ENCODE measurements at regions of chr4 and their contacts with region 1.

Region 1: GRCh38 chr4:2468445-2469192 is at the start of gene RNF4:
- DNase-seq: peak; percentile 96
- H3K4me3 ChIP-seq: peak within 1 kb of the TSS; percentile 91 to 92
- H3K27ac ChIP-seq: peak within 1 kb of the TSS; percentile 87 to 93
- H3K4me1 ChIP-seq: no peaks in the 10 kb centered on the region
- H3K27me3 ChIP-seq: no peaks in the 10 kb centered on the region
- CTCF ChIP-seq: peak in 2 of 4 experiments; percentile 3 to 16
- POLR2A ChIP-seq: peak; percentile 64
- total RNA-seq, gene RNF4: 33.9 to 56.1 TPM

Region 2: GRCh38 chr4:2515830-2516550 is 47.4 kb after region 1 on chr4:
- intact Hi-C with region 1: no loop called
- DNase-seq: no peak
- H3K4me3 ChIP-seq: no peak overlapping the region
- H3K27ac ChIP-seq: no peak overlapping the region
- H3K4me1 ChIP-seq: no peaks in the 10 kb centered on the region
- H3K27me3 ChIP-seq: no peaks in the 10 kb centered on the region
- CTCF ChIP-seq: no peak
- POLR2A ChIP-seq: no peak

Region 3: DNA sequence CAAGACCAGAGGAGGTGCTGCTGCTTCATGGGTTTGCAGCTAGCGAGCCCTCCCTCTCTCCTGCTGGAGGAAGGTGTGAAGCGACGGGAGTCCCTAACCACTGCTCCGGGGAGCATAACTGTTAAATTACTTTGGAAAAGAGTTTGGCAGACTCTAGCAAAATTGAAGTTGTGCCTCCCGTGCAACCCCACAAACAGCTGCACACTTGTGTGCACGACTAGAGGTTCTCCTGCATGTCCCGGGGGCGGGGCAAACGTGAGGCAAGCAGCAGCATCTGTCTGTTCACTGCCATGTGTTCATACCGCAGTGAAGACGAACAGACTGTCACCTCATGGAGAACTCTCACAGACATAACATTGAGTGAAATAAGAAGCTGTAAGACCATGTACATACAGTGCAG is 253.0 kb after region 1 on chr4:
- intact Hi-C with region 1: no loop called
- DNase-seq: no peak
- H3K4me3 ChIP-seq: no peak overlapping the region
- H3K27ac ChIP-seq: no peak overlapping the region
- H3K4me1 ChIP-seq: no peaks in the 10 kb centered on the region
- H3K27me3 ChIP-seq: no peaks in the 10 kb centered on the region
- CTCF ChIP-seq: no peak
- POLR2A ChIP-seq: no peak

Region 4: GRCh38 chr4:2843263-2843940 is 374.8 kb after region 1 on chr4 and contains the start of gene ADD1:
- intact Hi-C with region 1: no loop called
- DNase-seq: peak; percentile 90
- H3K4me3 ChIP-seq: peak within 1 kb of the TSS; percentile 69 to 96
- H3K27ac ChIP-seq: peak within 1 kb of the TSS; percentile 92 to 95
- H3K4me1 ChIP-seq: peaks cover 2% of the 10 kb centered on the region
- H3K27me3 ChIP-seq: no peaks in the 10 kb centered on the region
- CTCF ChIP-seq: no peak
- POLR2A ChIP-seq: peak; percentile 75
- total RNA-seq, gene ADD1: 164 to 321 TPM

Region 5: GRCh38 chr4:2862528-2862927 is 393.9 kb after region 1 on chr4:
- intact Hi-C with region 1: loop called (anchors 10 kb)
- DNase-seq: no peak
- H3K4me3 ChIP-seq: no peak overlapping the region
- H3K27ac ChIP-seq: peak overlapping the region in 1 of 2 donors; percentile 46
- H3K4me1 ChIP-seq: peaks cover 21% of the 10 kb centered on the region
- H3K27me3 ChIP-seq: no peaks in the 10 kb centered on the region
- CTCF ChIP-seq: no peak
- POLR2A ChIP-seq: no peak

Measured in prostate gland (tissue), 2 donors.